PC-3 (cell line): ENCODE measurements at regions of chr3 and their contacts with region 1.

Region 1: DNA sequence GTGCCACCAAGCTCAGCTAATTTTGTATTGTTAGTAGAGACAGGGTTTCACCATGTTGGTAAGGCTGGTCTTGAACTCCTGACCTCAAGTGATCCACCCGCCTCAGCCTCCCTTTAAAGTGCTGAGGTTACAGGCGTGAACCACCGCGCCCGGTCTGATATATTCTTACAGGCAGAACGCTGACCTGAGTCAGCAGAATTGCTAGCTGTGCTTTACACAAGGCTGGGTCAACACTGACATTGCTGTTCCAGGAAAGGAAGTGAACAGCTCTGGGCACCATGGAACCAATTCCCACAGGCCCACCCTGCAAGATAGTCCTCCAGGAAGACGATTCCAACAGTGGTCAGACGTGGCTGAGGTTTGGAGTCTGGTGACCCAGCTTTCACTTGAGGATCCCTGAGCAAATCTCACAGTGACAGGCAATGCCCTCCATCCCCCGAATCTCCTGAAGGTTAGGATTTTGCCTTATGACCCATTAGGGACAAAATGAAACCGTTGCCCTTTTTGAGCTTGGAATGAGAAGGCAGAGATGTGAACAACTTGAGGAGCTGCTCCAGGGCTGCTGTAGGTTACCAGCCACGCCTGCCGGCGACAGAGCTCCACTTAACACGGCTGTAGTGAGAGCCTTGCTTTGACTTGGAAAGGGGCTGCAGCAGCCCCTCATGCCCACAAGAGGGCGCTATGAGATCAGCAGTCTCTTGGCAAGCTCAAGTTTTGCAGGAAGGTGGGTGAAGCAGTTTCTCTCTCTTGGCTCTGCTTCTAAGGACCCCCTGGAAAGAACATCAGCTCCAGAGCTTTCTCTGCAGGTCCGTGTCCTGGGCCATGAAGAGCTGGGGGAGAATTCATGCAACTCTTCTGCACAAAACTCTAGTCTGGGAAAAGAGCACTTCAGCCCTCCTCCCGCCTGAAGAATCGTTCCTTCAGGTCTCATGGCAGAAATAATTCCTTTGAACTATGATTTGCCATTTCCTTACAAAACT is 74.1 kb downstream of the SENP2 start:
- DNase-seq: peak; percentile 93
- ATAC-seq: peak; percentile 34
- H3K4me3 ChIP-seq: no peak overlapping the region
- H3K27ac ChIP-seq: peak overlapping the region; percentile 64
- H3K4me1 ChIP-seq: peaks cover 55% of the 10 kb centered on the region
- H3K27me3 ChIP-seq: no peaks in the 10 kb centered on the region
- CTCF ChIP-seq: peak; percentile 99

Region 2: DNA sequence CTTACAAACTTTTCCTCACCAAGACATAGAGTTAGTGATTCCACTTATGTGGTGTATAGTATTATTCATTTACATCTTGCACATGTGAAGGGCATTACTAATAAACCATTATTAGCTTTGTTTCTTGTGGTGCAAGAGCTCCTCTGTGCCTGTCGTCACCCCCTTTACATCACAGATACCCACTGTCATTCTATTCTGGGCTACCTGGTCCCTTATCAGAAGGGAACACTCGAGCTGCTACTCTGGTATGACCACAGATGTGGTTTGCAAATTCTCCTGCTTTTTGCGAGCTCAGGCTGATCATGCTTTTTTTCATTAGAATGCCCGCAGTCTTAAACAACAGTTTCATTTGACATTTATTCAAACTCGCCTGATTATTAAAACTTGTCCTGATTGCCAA is 88.0 kb before region 1 on chr3:
- CTCF ChIA-PET with region 1: no interaction called
- POLR2A ChIA-PET with region 1: no interaction called
- intact Hi-C with region 1: no loop called
- DNase-seq: no peak
- ATAC-seq: no peak
- H3K4me3 ChIP-seq: no peak overlapping the region
- H3K27ac ChIP-seq: no peak overlapping the region
- H3K4me1 ChIP-seq: no peaks in the 10 kb centered on the region
- H3K27me3 ChIP-seq: no peaks in the 10 kb centered on the region
- CTCF ChIP-seq: no peak

Region 3: DNA sequence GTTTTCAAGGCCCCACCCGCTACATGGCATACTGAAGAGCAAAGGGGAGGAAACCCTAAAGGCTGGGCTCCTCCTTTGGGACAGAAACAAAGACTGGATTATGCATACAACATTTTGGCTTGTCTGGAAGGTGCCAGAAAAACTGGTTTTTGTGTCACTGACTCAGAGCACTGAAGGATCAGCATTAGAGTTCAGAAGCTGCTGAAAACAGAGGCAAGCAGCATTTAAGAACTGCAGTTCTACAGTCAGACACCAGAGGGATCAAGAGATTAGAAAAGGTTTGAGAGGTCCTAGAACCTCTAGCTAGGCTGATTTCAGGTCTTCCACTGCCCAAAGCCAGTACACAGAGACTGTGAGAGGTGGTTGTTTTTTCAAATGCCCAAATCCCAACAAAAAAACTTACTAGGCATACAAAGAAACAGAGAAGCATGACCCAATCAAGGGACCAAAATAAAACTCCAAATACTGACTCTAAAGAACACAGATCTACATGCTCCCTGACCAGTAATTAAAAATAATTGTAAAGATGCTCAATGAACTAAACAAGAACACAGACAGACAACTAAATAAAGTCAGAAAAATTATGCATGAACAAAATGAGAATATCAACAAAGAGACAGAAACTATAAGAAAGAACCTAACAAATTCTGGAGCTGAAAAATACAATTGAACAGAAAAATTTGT is 17.1 kb after region 1 on chr3:
- CTCF ChIA-PET with region 1: interaction called, 8 read pairs
- POLR2A ChIA-PET with region 1: interaction called, 12 read pairs
- intact Hi-C with region 1: no loop called
- DNase-seq: peak; percentile 98
- ATAC-seq: peak; percentile 94
- H3K4me3 ChIP-seq: no peak overlapping the region
- H3K27ac ChIP-seq: peak overlapping the region; percentile 38
- H3K4me1 ChIP-seq: no peaks in the 10 kb centered on the region
- H3K27me3 ChIP-seq: no peaks in the 10 kb centered on the region
- CTCF ChIP-seq: peak; percentile 89

Region 4: DNA sequence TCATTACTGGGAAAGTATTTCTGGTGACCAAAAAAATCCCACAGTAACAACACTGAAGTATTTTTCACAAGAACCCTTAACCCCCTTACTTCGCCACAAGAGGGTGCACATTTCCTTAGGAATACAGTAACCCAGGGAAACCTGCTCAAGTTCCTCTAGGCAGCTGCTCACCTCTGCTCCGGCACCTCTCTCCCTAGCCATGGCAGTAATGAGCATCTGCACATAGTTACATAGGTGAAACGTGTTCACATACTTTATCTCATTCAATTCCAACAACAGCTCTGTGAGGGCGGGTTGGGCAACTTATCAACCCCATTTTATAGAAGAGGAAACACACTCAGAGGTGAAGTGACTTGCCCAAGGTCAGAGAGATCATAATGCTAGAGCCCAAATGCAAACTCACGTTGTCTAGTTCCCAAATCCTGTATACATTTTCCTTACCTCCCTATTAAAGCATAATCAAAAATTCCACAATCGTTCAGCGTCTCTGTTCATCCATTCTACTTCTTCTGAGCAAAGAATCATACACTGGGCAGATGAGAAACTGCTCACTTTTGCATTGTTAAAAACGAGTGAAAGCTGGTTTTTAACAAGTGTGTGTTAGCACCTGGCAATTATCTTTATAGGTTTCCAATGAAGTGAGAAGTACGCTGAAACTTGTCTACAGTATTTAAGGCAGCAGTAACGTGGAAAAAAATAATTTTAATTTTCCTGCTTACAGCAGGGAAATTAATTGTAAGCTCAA is 73.9 kb after region 1 on chr3:
- CTCF ChIA-PET with region 1: interaction called, 9 read pairs
- POLR2A ChIA-PET with region 1: interaction called, 16 read pairs
- intact Hi-C with region 1: loop called (anchors 1 kb)
- DNase-seq: peak; percentile 91
- ATAC-seq: peak; percentile 39
- H3K4me3 ChIP-seq: no peak overlapping the region
- H3K27ac ChIP-seq: peak overlapping the region; percentile 100
- H3K4me1 ChIP-seq: peaks cover 90% of the 10 kb centered on the region
- H3K27me3 ChIP-seq: no peaks in the 10 kb centered on the region
- CTCF ChIP-seq: peak; percentile 86

Region 5: GRCh38 chr3:185796431-185797107 is 136.3 kb after region 1 on chr3:
- CTCF ChIA-PET with region 1: interaction called, 5 read pairs
- POLR2A ChIA-PET with region 1: interaction called, 10 read pairs
- intact Hi-C with region 1: no loop called
- DNase-seq: peak; percentile 100
- ATAC-seq: peak; percentile 88
- H3K4me3 ChIP-seq: peak overlapping the region; percentile 23; the same call in 1 of the 2 replicates
- H3K27ac ChIP-seq: peak overlapping the region; percentile 95
- H3K4me1 ChIP-seq: peaks cover 49% of the 10 kb centered on the region
- H3K27me3 ChIP-seq: no peaks in the 10 kb centered on the region
- CTCF ChIP-seq: no peak

Region 6: DNA sequence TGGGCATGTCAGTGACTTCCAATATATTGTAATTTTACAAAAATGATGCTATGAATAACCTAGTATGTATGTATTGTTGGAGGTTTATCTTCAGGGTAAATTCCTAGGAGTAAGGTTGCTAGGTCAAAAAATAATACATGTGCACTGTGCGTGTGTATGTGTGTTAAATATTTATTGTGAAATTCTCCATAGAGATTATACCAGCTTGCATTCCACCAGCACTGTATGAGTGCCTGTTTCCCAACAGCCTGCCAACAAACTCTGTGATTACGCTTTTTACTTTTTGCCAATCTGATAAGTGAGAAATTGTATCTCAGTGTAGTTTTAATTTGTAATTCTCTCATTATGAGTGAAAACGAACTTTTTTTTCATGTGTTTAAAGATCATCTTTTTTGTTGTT is 177.2 kb after region 1 on chr3:
- CTCF ChIA-PET with region 1: interaction called, 7 read pairs
- POLR2A ChIA-PET with region 1: interaction called, 17 read pairs
- intact Hi-C with region 1: no loop called
- DNase-seq: no peak
- ATAC-seq: no peak
- H3K4me3 ChIP-seq: no peak overlapping the region
- H3K27ac ChIP-seq: no peak overlapping the region
- H3K4me1 ChIP-seq: peaks cover 12% of the 10 kb centered on the region
- H3K27me3 ChIP-seq: no peaks in the 10 kb centered on the region
- CTCF ChIP-seq: no peak

Region 7: GRCh38 chr3:185929192-185930151 is 269.2 kb after region 1 on chr3:
- CTCF ChIA-PET with region 1: interaction called, 3 read pairs
- POLR2A ChIA-PET with region 1: no interaction called
- intact Hi-C with region 1: loop called (anchors 5 kb)
- DNase-seq: no peak
- ATAC-seq: peak; percentile 25
- H3K4me3 ChIP-seq: 0 out of 2 replicates have a peak overlapping the region, but pooled peaks have one; percentile 0
- H3K27ac ChIP-seq: no peak overlapping the region
- H3K4me1 ChIP-seq: peaks cover 71% of the 10 kb centered on the region
- H3K27me3 ChIP-seq: no peaks in the 10 kb centered on the region
- CTCF ChIP-seq: no peak